Caco-2 (cell line): ENCODE measurements at regions of chr2 and their contacts with region 1.

Region 1: GRCh38 chr2:10072656-10073480 is 7.3 kb downstream of the CYS1 start:
- DNase-seq: peak; percentile 90
- H3K4me3 ChIP-seq: no peak overlapping the region
- H3K4me3 Mint-ChIP-seq: no peak overlapping the region
- H3K27ac Mint-ChIP-seq: no peak overlapping the region
- H3K4me1 ChIP-seq: no peaks in the 10 kb centered on the region; the same call in 1 of the 2 replicates
- H3K4me1 Mint-ChIP-seq: peaks cover 6% of the 10 kb centered on the region
- H3K27me3 ChIP-seq: no peaks in the 10 kb centered on the region
- H3K27me3 Mint-ChIP-seq: peaks cover 15% of the 10 kb centered on the region
- CTCF ChIP-seq: peak; percentile 91 to 92

Region 2: GRCh38 chr2:10057231-10058107 is 15.4 kb before region 1 on chr2:
- CTCF ChIA-PET with region 1: interaction called, 31 read pairs
- POLR2A ChIA-PET with region 1: no interaction called
- intact Hi-C with region 1: loop called (anchors 1 kb)
- DNase-seq: peak; percentile 90 to 95
- H3K4me3 ChIP-seq: peak overlapping the region; percentile 37
- H3K4me3 Mint-ChIP-seq: peak overlapping the region; percentile 71
- H3K27ac Mint-ChIP-seq: peak overlapping the region; percentile 71
- H3K4me1 ChIP-seq: peaks cover 13% of the 10 kb centered on the region
- H3K4me1 Mint-ChIP-seq: peaks cover 14% of the 10 kb centered on the region
- H3K27me3 ChIP-seq: no peaks in the 10 kb centered on the region
- H3K27me3 Mint-ChIP-seq: no peaks in the 10 kb centered on the region
- CTCF ChIP-seq: no peak

Region 3: DNA sequence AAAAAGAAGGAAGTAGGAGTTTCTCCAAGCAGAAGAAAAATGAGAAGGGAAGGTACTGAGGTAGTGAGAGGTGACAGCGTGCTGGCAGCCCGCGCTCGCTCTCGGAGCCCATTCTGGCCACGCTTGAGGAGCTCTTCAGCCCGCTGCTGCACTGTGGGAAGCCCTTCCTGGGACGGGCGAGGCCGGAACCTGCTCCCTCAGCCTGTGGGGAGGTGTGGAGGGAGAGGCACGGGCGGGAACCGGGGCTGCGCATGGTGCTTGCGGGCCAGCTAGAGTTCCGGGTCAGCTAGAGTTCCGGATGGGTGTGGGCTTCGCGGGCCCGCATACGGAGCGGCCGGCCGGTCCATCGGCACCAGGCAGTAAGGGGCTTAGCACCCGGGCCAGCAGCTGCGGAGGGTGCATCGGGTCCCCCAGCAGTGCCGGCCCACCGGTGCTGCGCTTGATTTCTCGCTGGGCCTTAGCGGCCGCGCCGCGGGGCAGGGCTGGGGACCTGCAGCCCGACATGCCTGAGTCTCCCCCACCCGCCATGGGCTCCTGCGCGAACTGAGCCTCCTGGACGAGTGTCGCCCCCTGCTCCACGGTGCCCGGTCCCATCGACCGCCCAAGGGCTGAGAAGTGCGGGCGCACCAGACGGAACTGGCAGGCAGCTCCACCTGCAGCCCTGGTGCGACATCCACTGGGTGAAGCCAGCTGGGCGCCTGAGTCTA is 18.5 kb after region 1 on chr2:
- CTCF ChIA-PET with region 1: interaction called, 210 read pairs
- POLR2A ChIA-PET with region 1: no interaction called
- intact Hi-C with region 1: no loop called
- DNase-seq: no peak
- H3K4me3 ChIP-seq: no peak overlapping the region
- H3K4me3 Mint-ChIP-seq: no peak overlapping the region
- H3K27ac Mint-ChIP-seq: no peak overlapping the region
- H3K4me1 ChIP-seq: no peaks in the 10 kb centered on the region
- H3K4me1 Mint-ChIP-seq: no peaks in the 10 kb centered on the region
- H3K27me3 ChIP-seq: no peaks in the 10 kb centered on the region
- H3K27me3 Mint-ChIP-seq: no peaks in the 10 kb centered on the region
- CTCF ChIP-seq: no peak

Region 4: GRCh38 chr2:10122386-10123280 is 49.8 kb after region 1 on chr2 and contains the start of gene RRM2:
- CTCF ChIA-PET with region 1: interaction called, 8 read pairs
- POLR2A ChIA-PET with region 1: no interaction called
- intact Hi-C with region 1: loop called (anchors 1 kb)
- DNase-seq: peak; percentile 98
- H3K4me3 ChIP-seq: peak within 1 kb of the TSS; percentile 66
- H3K4me3 Mint-ChIP-seq: peak within 1 kb of the TSS; percentile 96
- H3K27ac Mint-ChIP-seq: peak within 1 kb of the TSS; percentile 96
- H3K4me1 ChIP-seq: peaks cover 11% of the 10 kb centered on the region
- H3K4me1 Mint-ChIP-seq: peaks cover 13% of the 10 kb centered on the region
- H3K27me3 ChIP-seq: no peaks in the 10 kb centered on the region
- H3K27me3 Mint-ChIP-seq: no peaks in the 10 kb centered on the region
- CTCF ChIP-seq: no peak
- total RNA-seq, gene RRM2: 160 and 169 TPM in 2 replicates

Region 5: GRCh38 chr2:10185046-10185445 is 112.2 kb after region 1 on chr2:
- CTCF ChIA-PET with region 1: no interaction called
- POLR2A ChIA-PET with region 1: no interaction called
- intact Hi-C with region 1: no loop called
- DNase-seq: no peak
- H3K4me3 ChIP-seq: no peak overlapping the region
- H3K4me3 Mint-ChIP-seq: no peak overlapping the region
- H3K27ac Mint-ChIP-seq: no peak overlapping the region
- H3K4me1 ChIP-seq: no peaks in the 10 kb centered on the region
- H3K4me1 Mint-ChIP-seq: no peaks in the 10 kb centered on the region
- H3K27me3 ChIP-seq: no peaks in the 10 kb centered on the region
- H3K27me3 Mint-ChIP-seq: no peaks in the 10 kb centered on the region
- CTCF ChIP-seq: no peak

Region 6: DNA sequence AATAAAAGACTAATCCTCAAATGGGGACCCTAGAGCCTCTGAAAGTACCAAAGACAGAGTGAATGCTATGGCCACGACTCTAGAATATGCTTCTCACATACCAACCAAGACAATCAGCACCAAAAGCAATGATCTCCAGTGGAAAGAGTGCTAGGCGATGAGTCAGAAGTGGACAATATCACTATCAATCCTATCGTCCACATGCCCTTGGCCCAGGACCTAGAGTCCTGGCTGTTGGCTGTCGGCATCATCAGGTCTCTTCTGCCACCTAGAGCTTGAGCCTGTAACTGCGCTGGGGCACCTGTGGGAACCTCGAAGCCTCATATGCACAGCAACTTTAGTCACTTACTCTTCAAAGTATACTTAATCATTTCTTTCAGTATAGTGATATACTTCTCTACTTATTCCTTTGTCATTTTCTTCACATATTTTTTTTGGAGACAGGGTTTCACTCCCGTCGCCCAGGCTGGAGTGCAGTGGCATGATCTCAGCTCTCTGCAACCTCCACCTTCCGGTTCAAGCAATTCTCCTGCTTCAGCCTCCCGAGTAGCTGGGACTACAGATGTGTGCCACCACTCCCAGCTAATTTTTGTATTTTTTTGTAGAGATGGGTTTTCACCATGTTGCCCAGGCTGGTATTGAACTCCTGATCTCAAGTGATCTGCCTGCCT is 587.2 kb after region 1 on chr2:
- CTCF ChIA-PET with region 1: no interaction called
- POLR2A ChIA-PET with region 1: no interaction called
- intact Hi-C with region 1: loop called (anchors 10 kb)
- DNase-seq: peak; percentile 67 to 76
- H3K4me3 ChIP-seq: no peak overlapping the region
- H3K4me3 Mint-ChIP-seq: no peak overlapping the region
- H3K27ac Mint-ChIP-seq: no peak overlapping the region
- H3K4me1 ChIP-seq: peaks cover 9% of the 10 kb centered on the region
- H3K4me1 Mint-ChIP-seq: peaks cover 7% of the 10 kb centered on the region
- H3K27me3 ChIP-seq: no peaks in the 10 kb centered on the region
- H3K27me3 Mint-ChIP-seq: no peaks in the 10 kb centered on the region
- CTCF ChIP-seq: peak; percentile 76 to 86